ENCODE measurements at regions of chr3 and their contacts with region 1.

Region 1: GRCh38 chr3:125594581-125595011 is 701 bp downstream of the OSBPL11 start:
- DNase-seq: no peak
- ATAC-seq: no peak
- H3K4me3 ChIP-seq: peak overlapping the region; percentile 74 to 96 (median 88)
- H3K4me3 Mint-ChIP-seq: peak overlapping the region; percentile 97
- H3K27ac ChIP-seq: peak overlapping the region; percentile 71 to 84
- H3K27ac Mint-ChIP-seq: peak overlapping the region; percentile 96
- H3K4me1 ChIP-seq: peaks cover 35 to 42% of the 10 kb centered on the region in 2 donors
- H3K4me1 Mint-ChIP-seq: peaks cover 42% of the 10 kb centered on the region
- H3K27me3 ChIP-seq: no peaks in the 10 kb centered on the region
- H3K27me3 Mint-ChIP-seq: no peaks in the 10 kb centered on the region
- CTCF ChIP-seq: no peak

Region 2: GRCh38 chr3:124730129-124730940 is 864.3 kb before region 1 on chr3 and contains the start of gene UMPS:
- CTCF ChIA-PET with region 1: no interaction called
- POLR2A ChIA-PET with region 1: no interaction called
- intact Hi-C with region 1: loop called (anchors 10 kb)
- DNase-seq: peak; percentile 94
- ATAC-seq: peak; percentile 97
- H3K4me3 ChIP-seq: peak within 1 kb of the TSS; percentile 86 to 99 (median 88)
- H3K4me3 Mint-ChIP-seq: peak within 1 kb of the TSS; percentile 99
- H3K27ac ChIP-seq: peak within 1 kb of the TSS; percentile 46 to 78
- H3K27ac Mint-ChIP-seq: peak within 1 kb of the TSS; percentile 94
- H3K4me1 ChIP-seq: peaks cover 10 to 14% of the 10 kb centered on the region in 2 donors
- H3K4me1 Mint-ChIP-seq: peaks cover 28% of the 10 kb centered on the region
- H3K27me3 ChIP-seq: peaks cover 0 to 10% (median 4%) of the 10 kb centered on the region in 4 experiments
- H3K27me3 Mint-ChIP-seq: peaks cover 20% of the 10 kb centered on the region
- CTCF ChIP-seq: no peak
- total RNA-seq, gene UMPS: 21.4 and 25.1 TPM in 2 replicates

Region 3: GRCh38 chr3:125374996-125375941 is 219.3 kb before region 1 on chr3 and contains the start of gene ZNF148:
- CTCF ChIA-PET with region 1: no interaction called
- POLR2A ChIA-PET with region 1: no interaction called
- intact Hi-C with region 1: loop called (anchors 2 kb)
- DNase-seq: peak; percentile 94
- ATAC-seq: peak; percentile 94
- H3K4me3 ChIP-seq: peak within 1 kb of the TSS; percentile 72 to 99 (median 96)
- H3K4me3 Mint-ChIP-seq: peak within 1 kb of the TSS; percentile 97
- H3K27ac ChIP-seq: peak within 1 kb of the TSS; percentile 83 to 97
- H3K27ac Mint-ChIP-seq: peak within 1 kb of the TSS; percentile 96
- H3K4me1 ChIP-seq: peaks cover 19 to 23% of the 10 kb centered on the region in 2 donors
- H3K4me1 Mint-ChIP-seq: peaks cover 40% of the 10 kb centered on the region
- H3K27me3 ChIP-seq: no peaks in the 10 kb centered on the region
- H3K27me3 Mint-ChIP-seq: no peaks in the 10 kb centered on the region
- CTCF ChIP-seq: no peak
- total RNA-seq, gene ZNF148: 71.5 and 74.6 TPM in 2 replicates

Region 4: DNA sequence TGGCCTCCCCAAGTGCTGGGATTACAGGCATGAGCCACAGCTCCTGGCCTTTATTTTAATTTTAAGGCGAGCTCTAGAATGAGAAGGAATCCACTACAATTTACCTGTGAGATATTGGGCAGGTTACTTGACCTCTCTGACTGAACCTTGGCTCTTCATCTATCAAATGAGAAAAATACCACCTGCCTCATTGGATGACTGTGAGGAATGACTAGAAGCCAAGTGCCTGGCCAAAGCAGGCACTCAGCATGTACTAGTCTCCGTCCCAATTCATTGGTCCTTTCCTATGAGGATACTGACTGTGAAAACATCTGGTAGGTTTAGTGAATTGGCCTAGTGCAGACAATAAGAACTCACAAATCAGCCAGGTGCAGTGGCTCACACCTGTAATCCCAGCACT is 39.2 kb after region 1 on chr3:
- CTCF ChIA-PET with region 1: no interaction called
- POLR2A ChIA-PET with region 1: no interaction called
- intact Hi-C with region 1: loop called (anchors 1 kb)
- DNase-seq: no peak
- ATAC-seq: no peak
- H3K4me3 ChIP-seq: no peak overlapping the region
- H3K4me3 Mint-ChIP-seq: no peak overlapping the region
- H3K27ac ChIP-seq: no peak overlapping the region
- H3K27ac Mint-ChIP-seq: no peak overlapping the region
- H3K4me1 ChIP-seq: peaks cover 11 to 15% of the 10 kb centered on the region in 2 donors
- H3K4me1 Mint-ChIP-seq: peaks cover 12% of the 10 kb centered on the region
- H3K27me3 ChIP-seq: peaks cover 0 to 7% (median 2%) of the 10 kb centered on the region in 4 experiments
- H3K27me3 Mint-ChIP-seq: peaks cover 17% of the 10 kb centered on the region
- CTCF ChIP-seq: no peak

Region 5: GRCh38 chr3:126357295-126358037 is 762.9 kb after region 1 on chr3 and contains the start of gene KLF15:
- CTCF ChIA-PET with region 1: no interaction called
- POLR2A ChIA-PET with region 1: no interaction called
- intact Hi-C with region 1: loop called (anchors 5 kb)
- DNase-seq: peak; percentile 85
- ATAC-seq: peak; percentile 93
- H3K4me3 ChIP-seq: peak within 1 kb of the TSS; percentile 12 to 84 (median 59)
- H3K4me3 Mint-ChIP-seq: peak within 1 kb of the TSS; percentile 95
- H3K27ac ChIP-seq: no peak within 1 kb of the TSS
- H3K27ac Mint-ChIP-seq: peak within 1 kb of the TSS; percentile 81
- H3K4me1 ChIP-seq: peaks cover 20 to 21% of the 10 kb centered on the region in 2 donors
- H3K4me1 Mint-ChIP-seq: peaks cover 16% of the 10 kb centered on the region
- H3K27me3 ChIP-seq: peaks cover 0 to 54% (median 22%) of the 10 kb centered on the region in 4 experiments
- H3K27me3 Mint-ChIP-seq: peaks cover 50% of the 10 kb centered on the region
- CTCF ChIP-seq: no peak
- total RNA-seq, gene KLF15: 0.83 and 2.2 TPM in 2 replicates

Region 6: GRCh38 chr3:127590593-127591477 is 1996.2 kb after region 1 on chr3 and contains the start of gene TPRA1:
- CTCF ChIA-PET with region 1: no interaction called
- POLR2A ChIA-PET with region 1: no interaction called
- intact Hi-C with region 1: loop called (anchors 10 kb)
- DNase-seq: peak; percentile 92
- ATAC-seq: peak; percentile 82
- H3K4me3 ChIP-seq: peak within 1 kb of the TSS; percentile 56 to 87 (median 76)
- H3K4me3 Mint-ChIP-seq: peak within 1 kb of the TSS; percentile 96
- H3K27ac ChIP-seq: peak within 1 kb of the TSS; percentile 15 to 69
- H3K27ac Mint-ChIP-seq: peak within 1 kb of the TSS; percentile 94
- H3K4me1 ChIP-seq: peaks cover 16 to 23% of the 10 kb centered on the region in 2 donors
- H3K4me1 Mint-ChIP-seq: peaks cover 31% of the 10 kb centered on the region
- H3K27me3 ChIP-seq: no peaks in the 10 kb centered on the region
- H3K27me3 Mint-ChIP-seq: no peaks in the 10 kb centered on the region
- CTCF ChIP-seq: no peak
- total RNA-seq, gene TPRA1: 19.8 and 25.2 TPM in 2 replicates

Measured in B cell (primary cell).